ENCODE measurements at regions of chr3 and their contacts with region 1.

Region 1: GRCh38 chr3:45929042-45929679 is 14.1 kb upstream of the CXCR6 start:
- DNase-seq: peak; percentile 85
- CTCF ChIP-seq: peak; percentile 97

Region 2: GRCh38 chr3:45516829-45517228 is 412.3 kb before region 1 on chr3:
- in situ Hi-C with region 1: loop called (anchors 10 kb)
- DNase-seq: no peak
- CTCF ChIP-seq: no peak

Region 3: DNA sequence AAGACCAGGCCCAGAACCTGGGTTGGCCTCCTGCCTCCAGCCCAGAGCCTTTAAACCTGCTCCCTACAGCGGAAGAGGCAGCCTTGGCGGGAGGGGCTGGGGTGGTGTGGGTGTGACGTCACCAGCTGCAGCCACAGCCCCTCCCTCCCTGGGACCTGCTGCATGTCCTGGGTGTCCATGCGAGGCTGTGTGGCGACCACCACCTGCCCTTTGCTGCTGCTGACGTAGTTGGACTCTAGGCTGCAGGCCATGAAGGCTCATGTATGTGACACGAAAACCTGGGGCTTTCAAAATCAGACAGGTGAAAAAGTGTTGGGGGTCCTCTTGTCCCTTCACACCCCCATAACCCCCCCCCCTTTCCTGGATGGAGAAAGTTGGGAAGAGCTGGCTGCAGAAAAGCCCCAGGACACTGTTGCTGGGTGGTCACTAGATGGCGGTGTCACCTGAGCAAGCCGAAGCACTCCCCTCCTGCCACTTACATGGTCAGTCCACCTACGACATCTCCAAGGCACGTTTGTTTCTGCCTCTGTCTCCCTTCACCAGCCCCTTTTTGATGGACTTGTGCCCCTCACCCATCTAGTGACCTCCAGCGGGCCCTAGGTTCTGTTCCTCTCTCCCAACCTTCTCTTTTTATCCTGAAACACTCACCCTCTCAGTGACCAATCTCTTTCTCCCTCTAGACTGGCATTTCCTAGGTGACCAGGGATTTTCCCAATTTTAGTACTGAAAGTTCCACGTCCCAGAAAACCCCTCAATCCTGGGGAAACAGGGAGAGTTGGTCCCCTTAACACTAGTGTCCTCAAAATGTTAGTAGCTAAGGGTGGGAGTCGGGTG is 168.1 kb before region 1 on chr3:
- in situ Hi-C with region 1: loop called (anchors 5 kb)
- DNase-seq: peak; percentile 87
- CTCF ChIP-seq: peak; percentile 88

Region 4: GRCh38 chr3:45986303-45986982 is 57.3 kb after region 1 on chr3:
- in situ Hi-C with region 1: no loop called
- DNase-seq: no peak
- CTCF ChIP-seq: no peak